Activated CD4-positive, alpha-beta memory T cell treated with anti-CD3 and anti-CD28 coated beads, Interleukin-2, amount 10 ng/mL, durations not matched to agents 7 days and 5 days (primary cell): ENCODE measurements at regions of chr6 and their contacts with region 1.

Region 1: GRCh38 chr6:30212865-30213666 is at the start of gene TRIM26:
- DNase-seq: peak; percentile 99
- H3K4me3 Mint-ChIP-seq: peak within 1 kb of the TSS; percentile 79
- H3K27ac Mint-ChIP-seq: peak within 1 kb of the TSS; percentile 99
- H3K4me1 Mint-ChIP-seq: peaks cover 56% of the 10 kb centered on the region
- H3K27me3 Mint-ChIP-seq: no peaks in the 10 kb centered on the region
- total RNA-seq, gene TRIM26: 91.1 to 91.5 TPM

Region 2: DNA sequence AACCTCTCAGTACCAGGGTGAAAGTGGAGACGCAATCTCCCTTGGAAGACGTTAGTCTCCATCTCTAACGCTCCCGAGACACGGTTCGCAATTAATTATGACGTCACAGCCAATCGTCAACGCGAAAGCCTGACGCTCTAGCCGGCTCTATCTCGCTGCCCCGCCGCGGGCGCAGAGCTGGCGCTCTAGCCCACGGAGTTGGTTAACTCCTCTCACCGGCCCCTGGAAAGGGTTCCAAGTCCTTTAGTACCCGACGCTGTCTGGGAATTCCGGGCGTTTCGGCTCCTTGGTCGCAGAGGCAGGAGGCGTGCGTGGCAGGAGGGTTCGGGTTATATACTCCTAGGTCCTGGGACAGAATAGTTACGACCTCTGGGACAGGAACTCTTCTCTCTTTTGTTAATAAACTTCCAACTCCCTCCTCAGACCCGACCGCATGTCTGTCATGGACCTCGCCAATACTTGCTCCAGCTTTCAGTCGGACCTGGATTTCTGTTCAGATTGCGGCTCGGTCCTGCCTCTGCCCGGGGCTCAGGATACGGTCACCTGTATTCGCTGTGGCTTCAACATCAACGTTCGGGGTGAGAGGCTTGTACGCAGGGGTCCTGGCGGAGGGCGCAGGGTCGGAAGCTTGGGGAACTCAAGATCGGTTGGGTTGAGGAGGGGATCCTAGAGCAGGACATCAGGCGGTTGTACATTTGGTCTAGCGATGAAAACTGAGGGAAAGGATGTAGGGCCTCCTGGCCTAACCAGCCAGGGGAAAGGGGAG is 151.8 kb before region 1 on chr6 and contains the start of gene POLR1H:
- CTCF ChIA-PET with region 1: no interaction called
- POLR2A ChIA-PET with region 1: interaction called, 24 read pairs
- DNase-seq: peak; percentile 90
- H3K4me3 Mint-ChIP-seq: peak within 1 kb of the TSS; percentile 98
- H3K27ac Mint-ChIP-seq: peak within 1 kb of the TSS; percentile 97
- H3K4me1 Mint-ChIP-seq: peaks cover 53% of the 10 kb centered on the region
- H3K27me3 Mint-ChIP-seq: no peaks in the 10 kb centered on the region
- total RNA-seq, gene POLR1H: 75.5 to 77.8 TPM

Region 3: GRCh38 chr6:30066577-30067459 is 146.2 kb before region 1 on chr6 and contains the start of gene PPP1R11:
- CTCF ChIA-PET with region 1: no interaction called
- POLR2A ChIA-PET with region 1: interaction called, 24 read pairs
- DNase-seq: peak; percentile 99
- H3K4me3 Mint-ChIP-seq: peak within 1 kb of the TSS; percentile 93
- H3K27ac Mint-ChIP-seq: peak within 1 kb of the TSS; percentile 94
- H3K4me1 Mint-ChIP-seq: peaks cover 63% of the 10 kb centered on the region
- H3K27me3 Mint-ChIP-seq: peaks cover 8% of the 10 kb centered on the region
- total RNA-seq, gene PPP1R11: 62.5 to 62.6 TPM

Region 4: GRCh38 chr6:30194797-30195690 is 18.0 kb before region 1 on chr6:
- CTCF ChIA-PET with region 1: interaction called, 5 read pairs
- POLR2A ChIA-PET with region 1: interaction called, 13 read pairs
- DNase-seq: no peak
- H3K4me3 Mint-ChIP-seq: no peak overlapping the region
- H3K27ac Mint-ChIP-seq: peak overlapping the region; percentile 29
- H3K4me1 Mint-ChIP-seq: peaks cover 7% of the 10 kb centered on the region
- H3K27me3 Mint-ChIP-seq: no peaks in the 10 kb centered on the region

Region 5: DNA sequence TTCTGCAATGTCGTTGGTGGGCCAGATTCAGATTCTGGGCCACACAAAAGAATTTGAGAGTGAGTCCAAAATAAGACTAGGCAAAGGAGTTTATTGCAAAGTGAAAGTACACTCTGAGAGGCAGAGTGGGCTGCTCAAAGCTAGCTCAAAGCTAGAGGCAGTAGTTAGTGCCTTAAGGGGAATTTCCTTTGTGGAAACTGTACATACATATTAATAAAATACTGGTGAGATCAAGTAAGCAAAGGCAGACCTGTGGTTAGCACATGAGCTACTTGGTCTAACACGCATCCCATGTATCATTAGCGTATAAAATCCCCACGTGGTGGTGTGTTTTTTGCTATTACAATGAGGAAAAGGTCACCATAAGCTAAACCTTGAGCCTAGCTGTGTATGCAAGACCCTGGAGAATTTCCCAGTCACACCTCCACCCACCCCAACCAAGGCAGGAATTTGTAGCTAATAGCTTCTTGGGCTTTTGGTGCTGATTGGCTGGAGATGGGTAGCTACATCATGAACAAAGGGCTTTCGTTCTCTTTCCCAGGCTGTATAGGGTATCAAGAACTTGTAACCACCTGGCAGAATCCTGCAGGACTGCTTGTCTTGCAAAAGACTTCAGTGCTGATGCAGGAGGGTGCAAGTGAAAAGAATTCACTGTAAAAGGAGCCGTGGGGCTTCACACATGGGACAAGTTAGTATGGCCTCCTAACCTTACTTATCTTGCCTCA is 14.9 kb after region 1 on chr6:
- CTCF ChIA-PET with region 1: interaction called, 19 read pairs
- POLR2A ChIA-PET with region 1: interaction called, 26 read pairs
- DNase-seq: no peak
- H3K4me3 Mint-ChIP-seq: no peak overlapping the region
- H3K27ac Mint-ChIP-seq: peak overlapping the region; percentile 9
- H3K4me1 Mint-ChIP-seq: peaks cover 6% of the 10 kb centered on the region
- H3K27me3 Mint-ChIP-seq: peaks cover 16% of the 10 kb centered on the region